ENCODE measurements at regions of chr5 and their contacts with region 1.

Region 1: GRCh38 chr5:57499262-57500050 is 16.8 kb upstream of the ACTBL2 start:
- H3K4me3 ChIP-seq: no peak overlapping the region
- H3K27ac ChIP-seq: no peak overlapping the region; the same call in 1 of the 2 replicates
- H3K4me1 ChIP-seq: peaks cover 15% of the 10 kb centered on the region
- CTCF ChIP-seq: peak; percentile 62; the same call in 1 of the 2 replicates

Region 2: DNA sequence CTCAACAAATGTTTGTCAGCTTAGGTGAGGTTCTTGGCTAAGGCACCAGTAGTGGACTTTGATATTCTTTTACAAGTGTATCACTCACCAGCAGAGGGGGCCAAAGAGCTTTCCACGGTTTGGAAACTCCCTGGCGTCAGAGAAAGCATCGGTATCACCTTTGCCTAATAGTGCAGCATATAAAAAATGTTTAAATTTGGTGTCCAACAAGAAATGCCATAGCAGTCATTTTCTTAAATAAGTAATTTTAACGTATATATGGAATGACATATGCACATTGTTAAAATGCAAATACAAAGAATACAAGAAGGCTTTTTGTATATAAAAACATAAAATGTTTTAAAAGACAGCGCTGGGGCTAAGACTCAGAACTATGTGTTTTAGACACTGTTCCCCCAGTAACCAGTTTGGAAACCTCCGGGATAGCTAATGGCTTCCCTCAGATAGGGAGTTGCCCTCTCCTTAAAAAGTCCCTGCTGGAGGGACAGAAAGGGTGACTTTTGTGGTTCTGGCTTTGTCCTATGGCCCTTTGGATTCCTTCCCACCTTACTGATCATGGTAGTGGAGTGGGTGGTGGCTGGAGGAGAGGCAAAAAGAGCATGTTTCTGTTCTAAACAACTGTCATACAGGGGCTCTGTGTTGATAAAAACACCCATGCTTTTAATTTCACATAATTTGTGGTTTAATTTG is 201.0 kb before region 1 on chr5:
- CTCF ChIA-PET with region 1: interaction called, 39 read pairs
- POLR2A ChIA-PET with region 1: no interaction called
- H3K4me3 ChIP-seq: no peak overlapping the region
- H3K27ac ChIP-seq: no peak overlapping the region
- H3K4me1 ChIP-seq: no peaks in the 10 kb centered on the region; the same call in none of the 2 replicates
- CTCF ChIP-seq: peak; percentile 54; the same call in 1 of the 2 replicates

Region 3: DNA sequence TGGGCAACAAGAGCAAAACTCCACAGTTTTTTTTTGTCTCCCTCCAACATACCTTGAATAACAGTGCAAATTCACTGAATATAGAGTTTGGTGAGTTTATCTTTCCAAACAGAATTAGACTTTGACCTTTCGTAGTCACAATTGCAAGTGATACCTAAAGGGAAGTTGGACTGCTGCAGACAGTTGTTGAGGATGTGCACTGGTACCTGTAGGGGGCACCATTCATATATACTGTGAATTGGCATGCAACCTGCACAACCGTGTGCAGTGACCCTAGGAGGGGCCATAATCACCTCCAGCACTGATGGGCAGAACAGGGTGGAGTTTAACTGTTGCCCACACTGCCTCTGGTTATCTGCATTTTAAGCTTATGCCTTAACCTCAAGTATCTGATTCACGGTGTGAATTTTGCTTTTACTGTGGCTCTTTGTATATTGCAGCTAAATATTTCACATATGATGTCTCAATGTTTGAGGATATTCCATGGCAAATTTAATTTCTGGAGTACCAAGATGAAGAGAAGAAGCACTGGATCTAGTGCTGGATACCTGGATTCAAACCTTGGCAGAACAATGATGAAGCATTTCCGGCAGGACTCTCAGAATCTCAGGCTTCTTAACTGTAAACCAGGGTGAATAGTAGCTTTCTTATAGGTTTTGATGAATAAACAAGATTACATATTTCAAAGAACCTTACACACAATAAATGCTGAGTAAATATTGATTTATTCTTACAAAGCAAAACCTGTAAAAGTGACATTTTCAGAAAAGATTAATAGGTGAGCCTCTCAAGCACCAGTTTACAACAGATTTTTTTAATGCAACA is 161.2 kb before region 1 on chr5:
- CTCF ChIA-PET with region 1: interaction called, 31 read pairs
- POLR2A ChIA-PET with region 1: no interaction called
- H3K4me3 ChIP-seq: no peak overlapping the region
- H3K27ac ChIP-seq: no peak overlapping the region
- H3K4me1 ChIP-seq: peaks cover 6% of the 10 kb centered on the region
- CTCF ChIP-seq: no peak

Region 4: GRCh38 chr5:57650360-57651069 is 151.1 kb after region 1 on chr5:
- CTCF ChIA-PET with region 1: interaction called, 15 read pairs
- POLR2A ChIA-PET with region 1: interaction called, 3 read pairs
- H3K4me3 ChIP-seq: no peak overlapping the region
- H3K27ac ChIP-seq: no peak overlapping the region
- H3K4me1 ChIP-seq: no peaks in the 10 kb centered on the region
- CTCF ChIP-seq: no peak

Region 5: DNA sequence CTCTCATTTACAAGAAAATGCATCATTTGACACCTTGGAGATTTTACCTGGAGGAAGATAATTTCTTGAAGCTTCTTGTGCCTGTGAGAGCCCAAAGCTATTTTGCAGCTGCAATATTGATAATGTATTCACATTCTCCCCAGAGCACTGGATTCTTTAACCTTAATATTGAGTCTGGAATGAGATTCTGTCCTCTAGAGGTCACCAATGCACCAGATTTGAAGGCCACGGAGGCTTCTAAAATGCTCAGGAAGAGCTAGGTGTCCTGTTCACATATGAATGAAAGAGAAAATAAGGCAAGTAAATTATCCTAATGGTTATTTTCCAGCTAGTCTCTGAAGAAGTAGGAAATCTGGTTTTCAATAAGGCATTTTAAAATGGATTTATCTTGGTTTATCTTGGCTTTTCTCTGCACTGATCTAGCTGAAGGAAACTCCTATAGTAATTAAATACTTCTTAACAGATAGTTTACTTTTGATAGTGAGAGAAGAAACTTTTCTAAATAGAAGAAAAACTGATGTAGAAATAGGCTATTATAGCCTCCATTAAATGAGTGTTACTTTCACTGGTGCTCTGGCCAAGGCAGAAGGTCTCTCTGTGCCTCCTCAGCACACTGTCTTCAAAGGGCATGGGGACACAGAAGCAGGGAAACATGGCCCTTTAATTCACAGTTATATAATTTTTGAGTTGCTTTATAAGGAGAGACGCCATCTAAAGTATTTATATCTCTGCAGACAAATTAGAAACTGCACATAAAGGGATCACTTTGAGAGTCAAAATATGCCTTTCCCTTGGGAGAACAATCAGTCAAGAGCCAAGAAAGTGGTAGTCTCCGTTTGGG is 280.1 kb after region 1 on chr5:
- CTCF ChIA-PET with region 1: interaction called, 62 read pairs
- POLR2A ChIA-PET with region 1: no interaction called
- H3K4me3 ChIP-seq: no peak overlapping the region
- H3K27ac ChIP-seq: no peak overlapping the region
- H3K4me1 ChIP-seq: peaks cover 24% of the 10 kb centered on the region
- CTCF ChIP-seq: peak; percentile 27; the same call in 1 of the 2 replicates

Region 6: DNA sequence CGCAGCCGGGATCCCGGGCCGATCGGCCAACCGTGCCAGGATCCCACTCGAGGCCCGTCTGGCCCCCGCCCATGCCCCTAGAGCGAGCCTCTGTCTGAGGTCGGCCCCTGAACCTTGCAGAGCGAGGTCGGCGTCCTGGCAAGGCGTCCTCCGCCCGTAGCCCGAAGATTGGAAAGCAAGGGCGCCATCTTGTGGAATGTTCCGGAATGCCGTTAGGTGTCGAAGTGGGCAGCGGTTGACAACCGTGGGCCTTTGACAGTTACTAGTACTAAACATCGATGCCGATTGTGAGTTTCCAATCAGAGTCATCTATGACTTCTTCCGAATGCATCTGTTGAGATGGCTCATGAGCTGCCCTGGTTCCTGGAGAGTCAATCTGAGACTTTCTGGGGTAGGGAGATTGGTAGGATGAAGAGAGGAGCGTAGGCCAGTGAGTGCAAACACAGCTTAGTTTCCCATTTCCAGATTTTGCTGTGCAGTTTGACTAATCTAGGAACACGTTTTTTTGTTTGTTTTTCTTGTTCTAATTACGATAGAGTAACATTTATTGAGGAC is 961.4 kb after region 1 on chr5:
- CTCF ChIA-PET with region 1: interaction called, 68 read pairs
- POLR2A ChIA-PET with region 1: interaction called, 15 read pairs
- H3K4me3 ChIP-seq: peak overlapping the region; percentile 98
- H3K27ac ChIP-seq: peak overlapping the region; percentile 98
- H3K4me1 ChIP-seq: no peaks in the 10 kb centered on the region
- CTCF ChIP-seq: peak; percentile 81

Measured in HEK293 (cell line).